Activated CD8-positive, alpha-beta T cell treated with anti-CD3 and anti-CD28 coated beads, Interleukin-2, amount 10 ng/mL, durations not matched to agents 7 days and 5 days (primary cell): ENCODE measurements at regions of chr1 and their contacts with region 1.

Region 1: GRCh38 chr1:108643492-108644335 is 17.2 kb downstream of the HENMT1 start:
- DNase-seq: peak; percentile 75
- ATAC-seq: no peak
- H3K4me3 Mint-ChIP-seq: no peak overlapping the region
- H3K27ac Mint-ChIP-seq: peak overlapping the region; percentile 98
- H3K4me1 Mint-ChIP-seq: peaks cover 85% of the 10 kb centered on the region
- H3K27me3 Mint-ChIP-seq: no peaks in the 10 kb centered on the region

Region 2: DNA sequence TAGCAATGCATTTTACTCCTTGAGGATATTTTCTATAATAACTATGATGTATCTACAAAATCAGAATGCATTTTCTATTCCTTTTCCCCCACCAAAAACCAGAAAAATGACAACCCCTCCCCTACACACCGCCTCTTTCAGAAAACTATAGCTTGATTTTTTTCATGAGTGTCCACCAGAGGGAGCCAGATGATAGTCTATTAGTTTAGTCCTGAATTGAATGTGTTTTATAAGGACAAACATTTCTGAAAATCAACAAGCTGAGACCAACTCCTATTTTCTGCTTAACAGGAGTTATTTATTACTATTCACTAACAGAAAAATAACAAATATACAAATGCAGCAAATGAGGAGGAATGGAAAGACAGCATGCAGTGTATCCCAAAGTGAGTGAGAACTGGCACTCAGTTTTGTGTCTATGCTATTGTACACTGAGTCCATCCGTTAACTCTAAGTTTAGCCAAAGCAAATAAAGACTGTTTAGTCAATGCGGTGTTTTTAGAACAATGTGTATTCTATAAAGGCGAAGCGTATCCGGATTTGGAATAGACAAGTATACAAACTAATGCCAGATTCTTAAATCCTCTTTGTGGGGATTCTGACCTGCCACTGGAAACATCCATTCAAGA is 861.4 kb before region 1 on chr1:
- CTCF ChIA-PET with region 1: interaction called, 11 read pairs
- POLR2A ChIA-PET with region 1: no interaction called
- DNase-seq: peak; percentile 69
- ATAC-seq: no peak
- H3K4me3 Mint-ChIP-seq: no peak overlapping the region
- H3K27ac Mint-ChIP-seq: no peak overlapping the region
- H3K4me1 Mint-ChIP-seq: peaks cover 26% of the 10 kb centered on the region
- H3K27me3 Mint-ChIP-seq: no peaks in the 10 kb centered on the region

Region 3: GRCh38 chr1:108512239-108512981 is 131.3 kb before region 1 on chr1:
- CTCF ChIA-PET with region 1: interaction called, 61 read pairs
- POLR2A ChIA-PET with region 1: interaction called, 3 read pairs
- DNase-seq: no peak
- ATAC-seq: no peak
- H3K4me3 Mint-ChIP-seq: no peak overlapping the region
- H3K27ac Mint-ChIP-seq: no peak overlapping the region
- H3K4me1 Mint-ChIP-seq: no peaks in the 10 kb centered on the region
- H3K27me3 Mint-ChIP-seq: peaks cover 57% of the 10 kb centered on the region

Region 4: DNA sequence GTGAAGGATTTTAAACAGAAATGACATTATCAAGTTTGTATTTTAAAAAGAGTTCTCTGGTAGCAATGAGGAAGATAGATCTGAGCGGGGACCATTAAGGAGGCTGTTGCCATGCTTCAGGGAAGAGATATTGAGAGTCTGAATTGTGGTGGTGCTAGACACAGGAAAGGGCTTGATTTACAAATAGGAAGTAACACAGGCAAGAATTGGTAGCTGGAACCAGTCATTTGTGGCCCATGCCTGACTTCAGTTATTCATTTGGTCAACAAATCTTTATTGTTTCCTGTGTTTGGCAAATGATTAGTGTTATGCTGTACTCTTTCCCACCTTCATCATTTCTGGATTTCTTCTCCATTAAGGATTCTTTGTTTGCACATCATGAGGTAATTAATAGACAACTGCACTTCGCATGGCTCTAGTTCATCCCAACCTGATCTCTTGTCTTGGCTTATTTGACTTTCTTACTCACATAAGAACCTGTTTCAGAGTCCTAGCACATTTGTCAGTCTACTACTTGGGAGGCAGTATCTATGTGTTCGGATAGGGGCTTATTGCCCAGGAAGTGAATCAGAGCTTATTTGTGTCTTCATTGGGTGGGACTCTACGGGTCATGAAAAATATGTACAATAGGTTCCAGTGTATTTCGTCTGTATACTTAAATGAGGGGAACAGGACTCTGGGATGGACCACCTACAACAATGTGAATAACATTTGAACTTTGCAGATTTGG is 51.5 kb before region 1 on chr1:
- CTCF ChIA-PET with region 1: interaction called, 22 read pairs
- POLR2A ChIA-PET with region 1: interaction called, 7 read pairs
- DNase-seq: no peak
- ATAC-seq: no peak
- H3K4me3 Mint-ChIP-seq: no peak overlapping the region
- H3K27ac Mint-ChIP-seq: peak overlapping the region; percentile 31
- H3K4me1 Mint-ChIP-seq: peaks cover 24% of the 10 kb centered on the region
- H3K27me3 Mint-ChIP-seq: no peaks in the 10 kb centered on the region

Region 5: DNA sequence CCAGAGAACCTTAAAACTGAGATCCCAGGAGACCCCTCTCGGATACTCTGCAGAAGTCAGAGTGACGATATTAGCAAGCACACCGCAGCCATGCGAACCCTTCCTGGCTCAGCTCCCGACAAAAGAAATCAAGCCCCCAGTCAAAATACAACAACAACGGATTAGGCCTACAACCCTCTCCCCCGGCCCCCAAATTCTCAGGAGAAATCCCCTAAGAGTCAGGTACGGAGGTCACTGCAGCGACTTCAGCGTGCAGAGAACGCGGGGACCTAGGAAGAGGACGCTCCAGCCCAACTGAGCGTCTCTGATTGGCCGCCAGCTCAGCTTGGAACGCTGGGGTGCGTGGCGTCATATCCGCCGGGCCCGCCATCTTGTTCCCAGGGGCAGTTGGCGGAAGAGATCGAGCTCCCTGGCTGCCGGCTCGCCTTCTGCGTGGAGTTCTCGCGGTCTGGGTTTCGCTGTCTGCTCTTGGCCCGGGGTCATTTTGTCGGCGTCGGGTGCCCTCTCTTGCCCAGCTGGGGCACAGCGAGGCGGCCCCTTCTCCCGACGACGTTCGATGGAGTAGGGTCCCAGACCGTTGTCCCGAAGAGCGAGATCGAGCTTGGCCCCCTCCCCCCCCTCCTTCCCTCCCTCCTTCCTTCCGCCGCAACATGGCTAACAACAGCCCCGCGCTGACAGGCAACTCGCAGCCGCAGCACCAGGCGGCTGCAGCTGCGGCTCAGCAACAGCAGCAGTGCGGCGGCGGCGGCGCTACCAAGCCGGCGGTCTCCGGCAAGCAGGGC is 48.4 kb after region 1 on chr1 and contains the start of gene PRPF38B:
- CTCF ChIA-PET with region 1: interaction called, 103 read pairs
- POLR2A ChIA-PET with region 1: interaction called, 252 read pairs
- DNase-seq: peak; percentile 97
- ATAC-seq: peak; percentile 89
- H3K4me3 Mint-ChIP-seq: peak within 1 kb of the TSS; percentile 96
- H3K27ac Mint-ChIP-seq: peak within 1 kb of the TSS; percentile 99
- H3K4me1 Mint-ChIP-seq: peaks cover 42% of the 10 kb centered on the region
- H3K27me3 Mint-ChIP-seq: no peaks in the 10 kb centered on the region
- total RNA-seq, gene PRPF38B: 66.8 to 69.1 TPM

Region 6: GRCh38 chr1:108780937-108781574 is 137.3 kb after region 1 on chr1:
- CTCF ChIA-PET with region 1: no interaction called
- POLR2A ChIA-PET with region 1: no interaction called
- DNase-seq: no peak
- ATAC-seq: no peak
- H3K4me3 Mint-ChIP-seq: no peak overlapping the region
- H3K27ac Mint-ChIP-seq: no peak overlapping the region
- H3K4me1 Mint-ChIP-seq: no peaks in the 10 kb centered on the region
- H3K27me3 Mint-ChIP-seq: no peaks in the 10 kb centered on the region